ENCODE measurements at regions of chrX and their contacts with region 1.

Region 1: GRCh38 chrX:153947009-153947769 is 2.7 kb upstream of the RENBP start:
- DNase-seq: peak; percentile 89
- ATAC-seq: peak; percentile 87
- H3K4me3 Mint-ChIP-seq: no peak overlapping the region
- H3K27ac Mint-ChIP-seq: peak overlapping the region; percentile 87
- H3K4me1 Mint-ChIP-seq: peaks cover 14% of the 10 kb centered on the region
- H3K27me3 Mint-ChIP-seq: no peaks in the 10 kb centered on the region

Region 2: DNA sequence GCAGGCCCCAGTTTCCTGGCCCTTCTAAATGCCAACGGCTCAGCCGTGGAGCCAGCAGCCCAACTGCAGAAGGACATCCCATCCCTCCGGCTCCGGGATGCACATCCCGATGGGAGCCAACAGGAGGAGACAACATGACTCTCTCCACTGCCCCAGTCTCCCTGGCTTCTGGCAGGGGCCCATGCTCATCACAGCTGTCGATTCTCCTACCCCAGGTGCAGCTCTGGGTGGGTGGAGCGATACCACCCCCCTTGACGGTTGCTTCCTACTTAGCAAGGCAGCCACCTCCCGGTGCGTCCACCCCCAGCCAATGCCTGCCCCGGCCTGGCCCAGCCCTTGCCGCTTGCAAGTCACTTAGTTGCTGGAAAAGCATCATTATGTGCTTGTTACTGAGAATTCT is 593.8 kb before region 1 on chrX:
- CTCF ChIA-PET with region 1: no interaction called
- POLR2A ChIA-PET with region 1: no interaction called
- intact Hi-C with region 1: no loop called
- DNase-seq: no peak
- ATAC-seq: no peak
- H3K4me3 Mint-ChIP-seq: no peak overlapping the region
- H3K27ac Mint-ChIP-seq: no peak overlapping the region
- H3K4me1 Mint-ChIP-seq: peaks cover 2% of the 10 kb centered on the region
- H3K27me3 Mint-ChIP-seq: no peaks in the 10 kb centered on the region

Region 3: GRCh38 chrX:153708415-153708814 is 238.8 kb before region 1 on chrX:
- CTCF ChIA-PET with region 1: no interaction called
- POLR2A ChIA-PET with region 1: no interaction called
- intact Hi-C with region 1: no loop called
- DNase-seq: peak; percentile 71
- ATAC-seq: peak; percentile 94
- H3K4me3 Mint-ChIP-seq: no peak overlapping the region
- H3K27ac Mint-ChIP-seq: no peak overlapping the region
- H3K4me1 Mint-ChIP-seq: no peaks in the 10 kb centered on the region
- H3K27me3 Mint-ChIP-seq: no peaks in the 10 kb centered on the region

Region 4: DNA sequence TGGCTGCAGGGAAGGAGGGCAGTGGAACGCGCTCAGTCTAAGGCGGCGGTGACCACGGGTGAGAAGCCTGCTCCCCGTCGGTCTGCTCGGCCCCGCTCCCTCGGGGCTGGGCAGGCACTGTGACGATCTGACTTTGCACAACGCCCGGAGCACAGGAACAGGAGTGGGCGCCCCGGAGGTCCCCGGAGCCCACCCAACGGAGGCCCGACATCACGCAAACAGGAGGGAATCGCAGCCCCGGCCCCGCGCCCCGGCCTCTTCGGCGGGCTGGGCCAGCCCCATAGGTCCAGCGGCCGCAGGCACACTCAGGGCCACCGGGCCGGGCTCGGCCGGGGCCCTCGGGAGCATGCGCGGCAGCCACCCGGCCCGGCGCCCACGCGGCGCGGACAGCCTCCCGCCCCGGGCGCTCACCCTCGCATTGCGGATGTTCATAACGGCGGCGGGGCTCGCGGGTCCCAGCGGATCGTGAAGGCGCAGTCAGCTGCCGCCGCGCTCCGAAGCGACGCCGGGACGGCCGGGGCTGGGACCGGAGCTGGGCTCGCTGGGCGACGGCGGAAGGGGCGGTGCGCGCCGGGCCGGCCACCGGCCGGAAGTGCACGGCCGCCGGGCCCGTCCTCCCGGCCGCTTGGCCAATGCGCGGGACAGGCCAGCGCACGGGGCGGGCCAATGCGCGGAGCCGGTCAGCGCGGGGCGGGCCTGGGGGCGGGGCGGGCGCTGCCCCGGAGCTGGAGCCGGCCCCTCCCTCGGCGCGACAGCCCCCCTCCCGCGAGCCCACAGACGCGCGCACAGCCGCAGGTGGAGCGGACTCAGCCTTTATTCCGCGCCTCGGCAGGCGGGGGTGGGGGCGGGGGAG is 12.5 kb before region 1 on chrX and contains the start of gene NAA10:
- CTCF ChIA-PET with region 1: interaction called, 12 read pairs
- POLR2A ChIA-PET with region 1: interaction called, 4 read pairs
- intact Hi-C with region 1: loop called in 1 of 2 experiments (anchors 1 kb)
- DNase-seq: peak; percentile 76
- ATAC-seq: peak; percentile 85
- H3K4me3 Mint-ChIP-seq: peak within 1 kb of the TSS; percentile 81
- H3K27ac Mint-ChIP-seq: peak within 1 kb of the TSS; percentile 51
- H3K4me1 Mint-ChIP-seq: peaks cover 19% of the 10 kb centered on the region
- H3K27me3 Mint-ChIP-seq: no peaks in the 10 kb centered on the region
- total RNA-seq, gene NAA10: 108 to 115 TPM

Region 5: GRCh38 chrX:154013614-154014360 is 66.6 kb after region 1 on chrX:
- CTCF ChIA-PET with region 1: no interaction called
- POLR2A ChIA-PET with region 1: no interaction called
- intact Hi-C with region 1: no loop called
- DNase-seq: peak; percentile 67
- ATAC-seq: peak; percentile 85
- H3K4me3 Mint-ChIP-seq: no peak overlapping the region
- H3K27ac Mint-ChIP-seq: peak overlapping the region; percentile 13
- H3K4me1 Mint-ChIP-seq: peaks cover 7% of the 10 kb centered on the region
- H3K27me3 Mint-ChIP-seq: no peaks in the 10 kb centered on the region

Measured in activated CD4-positive, alpha-beta T cell treated with anti-CD3 and anti-CD28 coated beads for 36 hours (primary cell).